B cell (primary cell): ENCODE measurements at regions of chr15 and their contacts with region 1.

Region 1: DNA sequence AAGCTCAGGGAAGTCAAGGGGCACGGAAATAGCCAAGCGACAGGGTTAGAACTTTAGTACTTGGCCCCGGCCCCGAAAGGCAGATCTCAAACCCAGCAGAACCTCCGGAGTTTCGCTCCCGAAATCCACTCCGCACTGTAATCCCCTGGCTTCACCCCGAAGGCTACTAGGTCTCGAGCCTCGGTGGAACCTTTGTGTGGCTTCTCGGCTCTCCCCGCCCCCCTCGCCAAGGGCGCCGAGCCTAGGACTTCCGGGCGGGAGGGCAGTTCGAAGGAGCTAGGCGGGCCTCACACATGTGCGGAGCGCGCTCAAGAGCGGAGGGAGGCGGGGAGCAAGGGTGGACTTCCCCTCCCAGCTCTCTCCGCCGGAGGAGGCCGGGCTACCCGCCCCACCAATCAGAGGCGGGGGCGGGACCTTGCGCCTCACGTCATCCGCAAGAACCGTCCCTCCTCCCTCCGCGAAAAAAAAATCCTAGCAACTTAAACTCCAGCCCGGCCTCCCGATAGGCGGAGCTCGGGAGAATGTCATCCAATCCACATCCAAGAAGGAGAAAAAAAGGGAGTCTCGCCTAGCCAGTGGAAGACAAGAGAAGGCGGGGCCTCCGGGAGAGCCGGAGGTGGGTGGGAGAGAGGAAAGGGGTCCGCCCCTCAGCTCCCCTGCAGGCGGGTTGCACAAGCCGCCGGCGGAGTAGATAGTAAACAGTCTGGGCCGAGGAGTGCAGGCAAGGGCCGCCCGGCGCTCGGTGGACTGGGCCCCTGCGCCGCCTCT is 2.4 kb upstream of the SIN3A start:
- DNase-seq: peak; percentile 99
- ATAC-seq: peak; percentile 40
- H3K4me3 ChIP-seq: peak overlapping the region; percentile 95 to 99 (median 97)
- H3K4me3 Mint-ChIP-seq: peak overlapping the region; percentile 98
- H3K27ac ChIP-seq: peak overlapping the region; percentile 90 to 95
- H3K27ac Mint-ChIP-seq: peak overlapping the region; percentile 99
- H3K4me1 ChIP-seq: peaks cover 21 to 37% of the 10 kb centered on the region in 2 donors
- H3K4me1 Mint-ChIP-seq: peaks cover 41% of the 10 kb centered on the region
- H3K27me3 ChIP-seq: no peaks in the 10 kb centered on the region
- H3K27me3 Mint-ChIP-seq: no peaks in the 10 kb centered on the region
- CTCF ChIP-seq: no peak

Region 2: DNA sequence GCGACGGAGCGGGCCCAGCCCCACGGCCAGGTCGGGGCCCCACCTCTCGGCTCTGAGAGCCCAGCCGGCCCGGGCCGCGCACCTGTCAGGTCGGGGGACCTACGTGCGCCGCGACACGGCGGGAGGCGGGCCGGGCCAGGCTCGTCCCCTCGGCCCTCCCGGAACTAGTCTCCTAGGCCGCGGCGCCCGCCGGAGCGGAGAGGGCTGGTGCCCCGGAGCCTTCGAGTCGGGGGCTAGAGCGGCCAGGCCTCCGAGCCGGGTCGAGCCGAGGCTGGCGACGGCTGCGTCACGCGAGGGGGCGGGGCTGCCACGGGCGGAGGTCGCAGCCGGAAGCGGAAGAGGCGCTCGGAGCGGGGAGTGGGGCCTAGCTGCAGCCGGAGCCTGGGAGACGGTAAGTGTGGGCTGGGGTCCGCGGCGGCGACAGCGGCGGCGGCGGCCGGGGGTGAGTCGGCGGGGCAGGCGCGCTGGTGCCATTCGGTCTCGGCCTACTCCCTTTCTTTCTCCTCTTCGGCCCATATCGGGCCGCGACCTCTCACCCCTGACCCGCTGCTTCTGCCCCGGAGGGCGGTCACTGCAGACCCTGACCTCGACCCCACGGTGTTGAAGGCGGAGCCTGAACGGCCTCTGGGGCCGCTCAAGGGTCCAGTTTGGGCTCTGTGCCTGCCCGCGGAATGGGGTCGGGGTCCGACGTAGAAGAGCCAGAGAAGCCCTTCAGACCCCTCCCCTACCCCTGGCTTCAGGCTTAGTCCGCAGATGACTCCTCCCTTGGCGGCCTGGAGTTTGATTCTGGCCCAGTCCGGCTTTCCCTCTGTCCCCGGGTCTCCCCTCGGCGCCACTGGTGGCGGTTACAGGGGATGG is 838.1 kb before region 1 on chr15 and contains the start of gene CLK3:
- CTCF ChIA-PET with region 1: no interaction called
- POLR2A ChIA-PET with region 1: no interaction called
- intact Hi-C with region 1: loop called (anchors 5 kb)
- DNase-seq: peak; percentile 96
- ATAC-seq: peak; percentile 80
- H3K4me3 ChIP-seq: peak within 1 kb of the TSS; percentile 50 to 100 (median 100)
- H3K4me3 Mint-ChIP-seq: peak within 1 kb of the TSS; percentile 92
- H3K27ac ChIP-seq: peak within 1 kb of the TSS; percentile 99
- H3K27ac Mint-ChIP-seq: peak within 1 kb of the TSS; percentile 97
- H3K4me1 ChIP-seq: peaks cover 18 to 39% of the 10 kb centered on the region in 2 donors
- H3K4me1 Mint-ChIP-seq: peaks cover 37% of the 10 kb centered on the region
- H3K27me3 ChIP-seq: no peaks in the 10 kb centered on the region
- H3K27me3 Mint-ChIP-seq: no peaks in the 10 kb centered on the region
- CTCF ChIP-seq: no peak
- total RNA-seq, gene CLK3: 164 and 176 TPM in 2 replicates

Region 3: GRCh38 chr15:75008629-75009326 is 445.1 kb before region 1 on chr15:
- CTCF ChIA-PET with region 1: no interaction called
- POLR2A ChIA-PET with region 1: no interaction called
- intact Hi-C with region 1: loop called (anchors 5 kb)
- DNase-seq: peak; percentile 86
- ATAC-seq: peak; percentile 91
- H3K4me3 ChIP-seq: peak overlapping the region in 3 of 5 experiments; percentile 6 to 40 (median 13)
- H3K4me3 Mint-ChIP-seq: peak overlapping the region; percentile 75
- H3K27ac ChIP-seq: peak overlapping the region; percentile 40 to 54
- H3K27ac Mint-ChIP-seq: peak overlapping the region; percentile 92
- H3K4me1 ChIP-seq: peaks cover 38 to 44% of the 10 kb centered on the region in 2 donors
- H3K4me1 Mint-ChIP-seq: peaks cover 40% of the 10 kb centered on the region
- H3K27me3 ChIP-seq: peaks cover 0 to 61% (median 31%) of the 10 kb centered on the region in 4 experiments
- H3K27me3 Mint-ChIP-seq: peaks cover 30% of the 10 kb centered on the region
- CTCF ChIP-seq: no peak

Region 4: DNA sequence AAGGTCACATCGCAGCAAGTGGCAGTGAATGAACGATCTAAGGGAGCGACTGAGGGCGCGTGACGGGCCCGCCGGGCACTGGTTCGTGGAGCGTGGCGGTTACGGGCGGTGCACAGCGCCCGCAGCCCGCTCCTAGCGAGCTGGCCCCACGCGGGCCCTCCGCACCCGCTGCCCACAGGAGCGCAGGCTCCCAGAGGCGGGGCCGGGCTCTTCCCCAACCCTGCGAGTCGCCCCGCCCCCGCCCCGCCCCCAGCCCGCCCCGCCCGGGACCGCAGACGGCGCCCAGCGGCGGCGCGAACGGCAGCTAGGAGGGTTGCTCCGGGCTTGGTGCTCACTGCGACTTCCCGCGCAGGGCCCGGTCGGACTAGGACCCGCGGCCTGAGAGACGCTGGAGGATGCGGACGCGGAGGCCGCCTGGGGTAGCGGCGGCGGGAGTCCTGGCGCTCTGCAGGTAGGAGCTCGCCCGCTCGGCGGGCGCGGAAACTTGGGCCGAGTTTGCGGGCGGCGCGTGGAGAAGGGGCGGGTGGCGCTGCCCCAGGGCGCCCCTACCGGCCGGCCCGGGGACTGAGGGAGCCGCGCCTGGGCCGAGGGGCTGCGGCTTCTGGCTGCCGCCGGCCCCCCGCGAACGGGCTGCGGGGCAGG is 252.2 kb before region 1 on chr15 and contains the start of gene C15orf39:
- CTCF ChIA-PET with region 1: no interaction called
- POLR2A ChIA-PET with region 1: interaction called, 3 read pairs
- intact Hi-C with region 1: loop called (anchors 10 kb)
- DNase-seq: peak; percentile 89
- ATAC-seq: peak; percentile 59
- H3K4me3 ChIP-seq: peak within 1 kb of the TSS; percentile 53 to 77 (median 73)
- H3K4me3 Mint-ChIP-seq: peak within 1 kb of the TSS; percentile 98
- H3K27ac ChIP-seq: peak within 1 kb of the TSS; percentile 59 to 86
- H3K27ac Mint-ChIP-seq: peak within 1 kb of the TSS; percentile 96
- H3K4me1 ChIP-seq: peaks cover 24 to 51% of the 10 kb centered on the region in 2 donors
- H3K4me1 Mint-ChIP-seq: peaks cover 41% of the 10 kb centered on the region
- H3K27me3 ChIP-seq: peaks cover 0 to 19% (median 5%) of the 10 kb centered on the region in 4 experiments
- H3K27me3 Mint-ChIP-seq: no peaks in the 10 kb centered on the region
- CTCF ChIP-seq: peak; percentile 97
- total RNA-seq, gene C15orf39: 72.1 and 72.7 TPM in 2 replicates

Region 5: DNA sequence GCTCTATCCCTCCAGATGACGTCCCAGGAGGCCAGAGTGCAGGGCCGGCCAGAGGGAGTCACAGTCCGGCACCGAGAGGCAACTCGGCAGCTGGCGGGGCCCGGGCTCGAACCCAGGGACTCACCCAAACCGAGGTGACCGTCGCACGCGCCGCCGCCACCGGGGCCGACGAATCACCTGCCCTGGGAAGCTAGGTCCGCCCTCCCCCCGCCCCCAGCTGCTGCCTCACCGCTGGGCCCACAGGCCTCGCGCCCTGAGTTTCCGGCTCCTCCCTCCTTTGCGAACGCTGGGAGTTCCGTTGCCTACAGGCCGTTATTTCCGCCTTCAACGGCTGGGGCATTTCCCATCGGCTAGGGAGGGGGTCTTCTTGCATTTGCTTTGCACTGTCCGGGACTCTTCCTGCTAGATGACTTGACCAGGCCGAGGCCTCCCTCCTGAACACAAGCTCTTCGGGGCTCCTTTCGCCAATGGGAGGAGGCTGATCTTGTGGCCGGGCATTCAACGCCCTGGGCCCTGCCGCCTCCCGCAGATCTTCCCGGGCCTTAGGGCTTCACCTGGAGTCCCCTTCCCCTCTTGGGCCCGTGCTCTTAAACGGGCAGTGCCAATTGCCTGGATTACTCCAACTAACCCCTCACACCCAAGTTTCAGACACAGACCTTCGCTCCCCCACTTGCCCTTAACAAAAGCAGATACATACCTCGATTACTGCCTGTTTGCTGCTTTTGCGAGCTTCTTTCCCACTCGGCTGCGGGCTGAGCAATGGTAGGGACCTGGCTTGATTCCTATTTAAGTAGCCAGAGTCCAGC is 171.9 kb after region 1 on chr15 and contains the start of gene SNUPN:
- CTCF ChIA-PET with region 1: interaction called, 7 read pairs
- POLR2A ChIA-PET with region 1: interaction called, 31 read pairs
- intact Hi-C with region 1: loop called (anchors 1 kb)
- DNase-seq: peak; percentile 96
- ATAC-seq: peak; percentile 91
- H3K4me3 ChIP-seq: peak within 1 kb of the TSS; percentile 72 to 97 (median 93)
- H3K4me3 Mint-ChIP-seq: peak within 1 kb of the TSS; percentile 91
- H3K27ac ChIP-seq: peak within 1 kb of the TSS; percentile 91 to 97
- H3K27ac Mint-ChIP-seq: peak within 1 kb of the TSS; percentile 95
- H3K4me1 ChIP-seq: peaks cover 7 to 12% of the 10 kb centered on the region in 2 donors
- H3K4me1 Mint-ChIP-seq: peaks cover 13% of the 10 kb centered on the region
- H3K27me3 ChIP-seq: no peaks in the 10 kb centered on the region
- H3K27me3 Mint-ChIP-seq: no peaks in the 10 kb centered on the region
- CTCF ChIP-seq: no peak
- total RNA-seq, gene SNUPN: 19.6 and 23.5 TPM in 2 replicates

Region 6: DNA sequence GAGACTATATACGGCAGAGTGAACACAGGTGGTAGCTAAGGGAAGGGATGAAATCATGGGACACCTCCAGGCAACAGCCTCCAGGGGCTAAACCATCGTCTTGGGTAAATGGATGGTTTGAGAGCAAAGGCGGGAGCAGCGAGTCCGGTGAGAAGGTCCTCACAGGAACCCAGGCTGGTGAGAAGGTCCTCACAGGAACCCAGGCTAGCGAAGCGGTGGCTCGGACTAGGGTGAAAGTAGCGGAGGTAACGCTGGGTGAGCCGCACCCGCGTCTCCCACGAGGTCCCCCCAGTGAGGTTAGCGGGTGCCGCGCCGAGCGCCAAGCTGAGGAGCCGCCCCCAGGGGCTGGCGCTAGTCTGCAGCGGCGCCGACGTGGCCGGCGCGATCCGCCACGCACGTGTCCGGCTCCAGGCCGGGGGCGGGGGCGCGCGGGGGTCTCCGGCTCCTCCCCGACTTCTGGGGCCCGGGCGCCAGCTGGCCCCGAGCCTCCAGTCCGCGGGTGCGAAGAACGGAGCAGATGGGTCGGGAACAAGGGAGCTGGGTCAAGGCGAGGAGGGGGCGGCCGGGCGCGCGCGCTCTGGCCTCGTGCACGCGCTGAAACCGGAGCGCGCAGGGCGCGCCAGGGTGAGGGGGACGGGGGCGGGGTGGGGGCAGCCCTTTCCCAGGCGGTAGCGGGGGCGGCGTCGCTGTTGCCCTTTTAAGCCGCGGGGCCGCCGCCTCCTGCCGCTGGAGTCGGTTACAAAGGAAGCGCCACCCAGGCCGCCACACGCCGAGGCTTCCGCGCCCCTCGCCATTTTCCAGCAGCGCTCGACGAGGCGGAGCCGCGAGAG is 389.1 kb after region 1 on chr15 and contains the start of gene UBE2Q2:
- CTCF ChIA-PET with region 1: no interaction called
- POLR2A ChIA-PET with region 1: interaction called, 6 read pairs
- intact Hi-C with region 1: loop called (anchors 5 kb)
- DNase-seq: peak; percentile 83
- ATAC-seq: peak; percentile 63
- H3K4me3 ChIP-seq: peak within 1 kb of the TSS; percentile 66 to 86 (median 83)
- H3K4me3 Mint-ChIP-seq: peak within 1 kb of the TSS; percentile 94
- H3K27ac ChIP-seq: peak within 1 kb of the TSS; percentile 65 to 68
- H3K27ac Mint-ChIP-seq: peak within 1 kb of the TSS; percentile 95
- H3K4me1 ChIP-seq: peaks cover 18 to 21% of the 10 kb centered on the region in 2 donors
- H3K4me1 Mint-ChIP-seq: peaks cover 36% of the 10 kb centered on the region
- H3K27me3 ChIP-seq: no peaks in the 10 kb centered on the region
- H3K27me3 Mint-ChIP-seq: no peaks in the 10 kb centered on the region
- CTCF ChIP-seq: no peak
- total RNA-seq, gene UBE2Q2: 31.2 and 33.6 TPM in 2 replicates

Region 7: GRCh38 chr15:77387365-77388105 is 1933.6 kb after region 1 on chr15:
- CTCF ChIA-PET with region 1: no interaction called
- POLR2A ChIA-PET with region 1: no interaction called
- intact Hi-C with region 1: no loop called
- DNase-seq: peak; percentile 10
- ATAC-seq: no peak
- H3K4me3 ChIP-seq: no peak overlapping the region
- H3K4me3 Mint-ChIP-seq: no peak overlapping the region
- H3K27ac ChIP-seq: no peak overlapping the region
- H3K27ac Mint-ChIP-seq: no peak overlapping the region
- H3K4me1 ChIP-seq: peaks cover 4 to 19% of the 10 kb centered on the region in 2 donors
- H3K4me1 Mint-ChIP-seq: peaks cover 53% of the 10 kb centered on the region
- H3K27me3 ChIP-seq: no peaks in the 10 kb centered on the region
- H3K27me3 Mint-ChIP-seq: no peaks in the 10 kb centered on the region
- CTCF ChIP-seq: no peak